AG04449 (cell line): ENCODE measurements at regions of chr22 and their contacts with region 1.

Region 1: GRCh38 chr22:49992921-49993648 is 19.5 kb downstream of the IL17REL start:
- DNase-seq: no peak
- H3K4me3 ChIP-seq: no peak overlapping the region
- CTCF ChIP-seq: peak; percentile 89

Region 2: GRCh38 chr22:49847751-49848689 is 145.1 kb before region 1 on chr22:
- CTCF ChIA-PET with region 1: no interaction called
- POLR2A ChIA-PET with region 1: no interaction called
- DNase-seq: no peak
- H3K4me3 ChIP-seq: no peak overlapping the region
- CTCF ChIP-seq: no peak

Region 3: GRCh38 chr22:49930739-49931412 is 62.2 kb before region 1 on chr22:
- CTCF ChIA-PET with region 1: interaction called, 23 read pairs
- POLR2A ChIA-PET with region 1: no interaction called
- DNase-seq: no peak
- H3K4me3 ChIP-seq: no peak overlapping the region
- CTCF ChIP-seq: peak; percentile 64

Region 4: DNA sequence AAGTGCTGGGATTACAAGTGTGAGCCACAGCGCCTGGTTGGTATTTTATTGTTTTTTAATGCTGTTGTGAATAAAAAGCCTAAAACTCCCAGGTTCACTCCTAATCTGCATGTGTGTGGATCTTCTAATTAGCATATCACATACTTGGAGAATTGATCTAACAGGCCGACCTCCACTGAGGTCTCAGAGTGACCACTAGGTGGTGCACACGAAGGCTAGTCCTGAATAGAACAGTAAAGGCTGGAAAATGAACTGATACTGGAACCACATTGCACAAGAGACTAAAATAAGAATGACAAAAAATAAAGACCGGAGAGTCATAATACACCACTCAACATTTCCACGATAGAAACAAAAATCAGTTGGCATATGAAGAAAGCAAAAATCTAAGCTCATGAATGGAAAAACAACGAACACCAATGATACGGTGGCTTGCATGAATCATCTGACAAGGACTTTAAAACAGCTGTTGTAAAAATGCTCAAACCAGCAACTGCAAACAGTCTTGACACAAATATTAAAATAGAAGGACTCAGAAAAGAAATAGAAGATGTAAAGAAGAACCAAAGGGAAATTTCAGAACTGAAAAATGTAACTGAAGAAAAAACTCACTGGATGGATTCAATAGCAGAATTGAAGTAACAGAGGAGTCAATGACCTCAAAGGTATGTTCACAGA is 13.4 kb before region 1 on chr22:
- CTCF ChIA-PET with region 1: interaction called, 35 read pairs
- POLR2A ChIA-PET with region 1: no interaction called
- DNase-seq: no peak
- H3K4me3 ChIP-seq: no peak overlapping the region
- CTCF ChIP-seq: peak; percentile 54

Region 5: DNA sequence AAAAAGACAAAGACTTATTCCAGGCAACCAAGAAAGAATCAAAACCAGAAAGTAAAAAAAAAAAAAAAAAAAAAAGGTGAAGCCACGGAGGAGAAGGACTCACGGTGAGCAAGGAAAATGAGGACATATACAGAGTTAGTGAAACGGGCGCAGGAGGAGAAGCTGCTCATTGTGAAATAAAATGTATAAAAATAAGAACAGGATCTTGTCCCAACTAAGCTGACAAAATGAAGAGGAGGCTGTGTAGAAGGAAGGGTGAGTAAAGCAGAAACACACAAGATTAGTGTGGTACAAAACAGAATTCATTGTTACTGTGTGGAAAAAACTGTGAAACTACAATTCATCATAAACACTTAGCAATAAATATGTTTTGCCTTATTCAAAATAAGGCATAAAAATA is 11.8 kb after region 1 on chr22:
- CTCF ChIA-PET with region 1: interaction called, 23 read pairs
- POLR2A ChIA-PET with region 1: no interaction called
- DNase-seq: no peak
- H3K4me3 ChIP-seq: no peak overlapping the region
- CTCF ChIP-seq: no peak